ENCODE measurements at regions of chr2 and their contacts with region 1.

Region 1: DNA sequence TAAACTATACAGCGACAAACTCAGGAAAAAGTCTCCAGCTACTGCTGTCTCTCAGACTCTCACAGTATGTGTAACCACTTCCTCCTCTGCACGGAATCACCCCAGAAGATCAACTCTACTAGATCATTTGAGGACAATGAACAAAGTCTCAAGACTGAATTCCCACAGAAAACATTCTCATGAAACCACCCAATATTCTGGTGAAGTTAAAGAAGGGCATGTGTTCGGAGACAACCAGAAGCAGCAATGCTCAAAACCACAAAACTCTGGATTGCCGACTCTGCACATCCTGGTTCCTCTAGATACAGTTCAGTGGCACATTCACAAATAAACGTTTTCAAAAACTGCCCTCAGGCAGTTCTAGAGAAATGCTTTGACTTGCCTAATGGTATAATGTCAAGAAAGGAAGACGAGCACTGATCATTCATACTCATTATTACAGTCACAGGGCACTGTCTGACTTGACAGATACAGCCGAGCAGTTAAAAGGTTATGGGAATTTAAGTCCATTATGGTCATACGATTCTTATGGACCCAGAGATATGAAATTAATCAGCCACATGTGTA is 91.9 kb upstream of the STK17B start:
- DNase-seq: peak; percentile 74
- ATAC-seq: peak; percentile 73
- H3K4me3 Mint-ChIP-seq: peak overlapping the region; percentile 79
- H3K27ac Mint-ChIP-seq: peak overlapping the region; percentile 92
- H3K4me1 Mint-ChIP-seq: peaks cover 84% of the 10 kb centered on the region
- H3K27me3 Mint-ChIP-seq: no peaks in the 10 kb centered on the region

Region 2: GRCh38 chr2:196160101-196160500 is 103.2 kb before region 1 on chr2:
- CTCF ChIA-PET with region 1: interaction called, 8 read pairs
- POLR2A ChIA-PET with region 1: interaction called, 137 read pairs
- DNase-seq: peak; percentile 88
- ATAC-seq: peak; percentile 35
- H3K4me3 Mint-ChIP-seq: peak overlapping the region; percentile 66
- H3K27ac Mint-ChIP-seq: peak overlapping the region; percentile 82
- H3K4me1 Mint-ChIP-seq: peaks cover 50% of the 10 kb centered on the region
- H3K27me3 Mint-ChIP-seq: no peaks in the 10 kb centered on the region

Region 3: GRCh38 chr2:196205881-196206435 is 57.3 kb before region 1 on chr2:
- CTCF ChIA-PET with region 1: no interaction called
- POLR2A ChIA-PET with region 1: interaction called, 24 read pairs
- DNase-seq: no peak
- ATAC-seq: no peak
- H3K4me3 Mint-ChIP-seq: no peak overlapping the region
- H3K27ac Mint-ChIP-seq: no peak overlapping the region
- H3K4me1 Mint-ChIP-seq: peaks cover 57% of the 10 kb centered on the region
- H3K27me3 Mint-ChIP-seq: no peaks in the 10 kb centered on the region

Region 4: DNA sequence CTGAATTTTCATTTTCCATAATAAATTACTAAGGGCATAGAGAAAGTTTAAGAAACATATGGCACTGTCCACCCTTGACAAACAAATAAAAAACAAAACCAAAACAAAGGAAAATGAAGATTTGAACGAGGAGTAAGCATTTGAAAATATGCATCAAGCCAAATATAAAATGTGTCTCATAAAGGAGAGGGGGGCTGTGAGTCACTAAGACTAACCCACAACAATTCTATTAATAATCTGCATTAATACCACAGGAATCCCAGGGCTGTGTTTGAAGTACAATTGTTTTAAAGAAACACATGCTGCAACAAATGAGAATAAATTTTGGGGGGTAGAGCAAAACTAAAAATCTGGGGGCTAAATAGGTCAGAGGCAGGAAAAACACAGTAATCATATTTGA is 38.1 kb before region 1 on chr2:
- CTCF ChIA-PET with region 1: interaction called, 14 read pairs
- POLR2A ChIA-PET with region 1: interaction called, 11 read pairs
- DNase-seq: no peak
- ATAC-seq: no peak
- H3K4me3 Mint-ChIP-seq: peak overlapping the region; percentile 12
- H3K27ac Mint-ChIP-seq: peak overlapping the region; percentile 27
- H3K4me1 Mint-ChIP-seq: peaks cover 80% of the 10 kb centered on the region
- H3K27me3 Mint-ChIP-seq: no peaks in the 10 kb centered on the region

Region 5: DNA sequence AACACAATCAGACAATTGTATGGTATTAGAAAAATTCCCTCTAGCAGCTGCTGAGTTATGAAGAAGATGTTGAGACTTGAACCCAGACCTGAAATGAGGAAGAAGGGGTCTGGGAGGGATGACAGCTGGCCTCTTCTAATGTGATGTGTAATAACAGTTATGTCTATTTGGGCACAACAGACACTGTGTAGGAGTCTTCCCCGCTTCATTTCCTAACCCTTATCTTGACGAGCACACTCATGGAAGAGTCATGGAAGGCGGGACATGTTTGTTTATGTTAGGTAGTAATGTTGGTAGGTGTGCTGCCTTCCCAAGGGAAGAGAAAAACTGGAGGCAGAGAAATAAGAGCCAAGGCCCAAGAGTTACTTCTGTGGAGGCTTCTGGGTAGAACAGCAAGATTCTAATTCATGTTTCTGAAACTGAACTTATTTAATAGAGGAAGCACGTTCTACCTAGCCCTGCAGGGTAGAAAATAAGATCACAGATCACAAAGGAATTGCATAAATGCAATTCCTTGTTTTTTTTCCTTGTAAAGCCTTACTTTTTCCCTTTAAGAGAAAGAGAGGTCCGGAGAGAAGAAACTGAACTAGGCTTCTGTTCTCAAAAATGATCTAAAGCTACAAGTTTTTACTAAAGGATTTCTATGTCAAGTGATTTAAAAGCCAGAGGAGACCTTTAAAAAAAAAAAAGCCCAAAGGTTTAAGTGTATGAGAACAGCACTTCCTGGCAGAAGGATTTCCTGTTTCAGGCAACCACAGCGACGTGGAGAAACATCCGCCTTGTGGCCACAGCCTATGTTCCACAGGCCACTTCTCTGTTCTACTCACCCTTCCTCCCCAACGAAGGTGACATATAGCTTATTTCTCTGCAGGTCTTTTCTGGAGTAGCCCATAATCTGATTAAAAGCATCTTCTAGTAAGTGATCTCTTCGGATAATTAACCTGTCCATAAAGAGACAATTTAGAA is 23.4 kb before region 1 on chr2:
- CTCF ChIA-PET with region 1: interaction called, 66 read pairs
- POLR2A ChIA-PET with region 1: interaction called, 261 read pairs
- DNase-seq: peak; percentile 94
- ATAC-seq: peak; percentile 75
- H3K4me3 Mint-ChIP-seq: peak overlapping the region; percentile 58
- H3K27ac Mint-ChIP-seq: peak overlapping the region; percentile 99
- H3K4me1 Mint-ChIP-seq: peaks cover 86% of the 10 kb centered on the region
- H3K27me3 Mint-ChIP-seq: no peaks in the 10 kb centered on the region

Region 6: DNA sequence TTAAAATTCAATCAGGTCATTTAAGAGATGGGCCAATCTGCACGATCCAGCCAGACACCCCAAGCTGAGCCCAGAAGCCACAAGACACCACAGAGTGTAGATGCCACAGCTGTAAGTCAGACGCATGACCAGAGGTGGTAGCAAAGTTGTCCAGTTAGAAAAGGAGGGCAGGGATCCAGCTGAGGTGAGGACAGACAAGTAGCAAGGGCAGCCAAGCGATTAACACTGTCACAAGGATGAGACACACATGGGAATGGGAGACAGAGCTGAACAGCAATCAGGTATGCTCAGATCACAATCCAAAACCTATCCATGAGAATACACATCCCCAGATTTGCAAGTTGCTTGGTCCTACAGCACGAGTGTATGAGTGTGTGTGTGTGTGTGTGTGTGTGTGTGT is 51.5 kb after region 1 on chr2:
- CTCF ChIA-PET with region 1: no interaction called
- POLR2A ChIA-PET with region 1: no interaction called
- DNase-seq: no peak
- ATAC-seq: no peak
- H3K4me3 Mint-ChIP-seq: no peak overlapping the region
- H3K27ac Mint-ChIP-seq: no peak overlapping the region
- H3K4me1 Mint-ChIP-seq: peaks cover 6% of the 10 kb centered on the region
- H3K27me3 Mint-ChIP-seq: peaks cover 6% of the 10 kb centered on the region

Region 7: GRCh38 chr2:196601430-196602306 is 338.4 kb after region 1 on chr2:
- CTCF ChIA-PET with region 1: no interaction called
- POLR2A ChIA-PET with region 1: no interaction called
- DNase-seq: no peak
- ATAC-seq: no peak
- H3K4me3 Mint-ChIP-seq: no peak overlapping the region
- H3K27ac Mint-ChIP-seq: no peak overlapping the region
- H3K4me1 Mint-ChIP-seq: no peaks in the 10 kb centered on the region
- H3K27me3 Mint-ChIP-seq: peaks cover 11% of the 10 kb centered on the region

Measured in activated CD8-positive, alpha-beta T cell treated with anti-CD3 and anti-CD28 coated beads, Interleukin-2, amount 10 ng/mL, durations not matched to agents 7 days and 5 days (primary cell).